Naive thymus-derived CD4-positive, alpha-beta T cell (primary cell): ENCODE measurements at regions of chr20 and their contacts with region 1.

Region 1: GRCh38 chr20:4813863-4814695 is 92.4 kb downstream of the PRND start:
- DNase-seq: peak; percentile 40 to 91 (median 88)
- ATAC-seq: peak; percentile 80
- H3K4me3 ChIP-seq: peak overlapping the region; percentile 86
- H3K4me3 Mint-ChIP-seq: peak overlapping the region; percentile 78 to 99 (median 92)
- H3K27ac ChIP-seq: peak overlapping the region; percentile 98
- H3K27ac Mint-ChIP-seq: peak overlapping the region; percentile 97 to 100 (median 99)
- H3K4me1 ChIP-seq: peaks cover 68 to 69% of the 10 kb centered on the region in 2 donors
- H3K4me1 Mint-ChIP-seq: peaks cover 56 to 92% (median 88%) of the 10 kb centered on the region in 7 donors
- H3K27me3 ChIP-seq: no peaks in the 10 kb centered on the region
- H3K27me3 Mint-ChIP-seq: no peaks in the 10 kb centered on the region

Region 2: DNA sequence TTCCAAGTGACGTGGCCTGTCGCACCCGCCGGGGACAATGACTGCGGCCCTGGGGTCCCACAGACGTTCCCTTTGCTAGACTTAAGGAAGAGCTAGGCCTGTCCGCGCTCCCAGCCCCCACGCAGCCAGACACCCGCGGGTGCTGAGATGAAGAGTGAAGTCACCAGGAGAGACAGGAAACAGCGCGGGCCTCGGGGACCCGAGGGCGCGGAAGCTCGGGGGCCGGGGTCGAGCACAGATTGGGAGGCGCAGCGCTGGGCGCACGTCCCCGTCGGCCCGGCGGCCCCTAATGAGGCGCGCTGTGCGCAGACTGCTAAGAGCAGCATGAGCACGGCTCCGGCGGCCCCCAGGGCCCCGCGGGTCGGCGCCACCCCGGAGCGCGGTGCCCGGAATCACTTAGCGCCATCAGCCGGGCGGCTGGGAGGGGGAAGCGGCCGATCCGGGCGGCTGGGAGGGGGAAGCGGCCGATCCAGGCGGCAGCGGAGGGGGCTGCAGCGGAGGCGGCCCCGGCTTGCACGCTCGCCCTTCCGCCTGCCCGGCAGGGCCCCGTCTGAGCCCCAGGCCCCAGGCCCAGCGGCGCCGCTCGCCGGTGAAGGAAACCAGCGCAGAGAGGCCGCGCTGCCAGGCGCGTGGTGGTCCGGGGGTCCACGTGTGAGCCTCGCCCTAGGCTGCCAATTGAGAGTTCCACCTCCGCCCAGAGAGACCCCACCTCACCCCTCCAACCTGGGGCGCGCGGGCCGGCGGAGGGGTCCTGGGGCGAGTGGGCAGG is 1721.3 kb before region 1 on chr20:
- CTCF ChIA-PET with region 1: no interaction called
- POLR2A ChIA-PET with region 1: no interaction called
- intact Hi-C with region 1: loop called in 1 of 2 experiments (anchors 5 kb)
- DNase-seq: peak in 8 of 9 donors; percentile 41 to 75 (median 70)
- ATAC-seq: peak; percentile 27
- H3K4me3 ChIP-seq: peak overlapping the region; percentile 28
- H3K4me3 Mint-ChIP-seq: peak overlapping the region; percentile 78 to 97 (median 93)
- H3K27ac ChIP-seq: peak overlapping the region; percentile 95
- H3K27ac Mint-ChIP-seq: peak overlapping the region; percentile 88 to 100 (median 100)
- H3K4me1 ChIP-seq: peaks cover 0 to 24% of the 10 kb centered on the region in 2 donors
- H3K4me1 Mint-ChIP-seq: peaks cover 17 to 50% (median 31%) of the 10 kb centered on the region in 7 donors
- H3K27me3 ChIP-seq: no peaks in the 10 kb centered on the region
- H3K27me3 Mint-ChIP-seq: peaks cover 0 to 39% (median 0%) of the 10 kb centered on the region in 5 donors

Region 3: DNA sequence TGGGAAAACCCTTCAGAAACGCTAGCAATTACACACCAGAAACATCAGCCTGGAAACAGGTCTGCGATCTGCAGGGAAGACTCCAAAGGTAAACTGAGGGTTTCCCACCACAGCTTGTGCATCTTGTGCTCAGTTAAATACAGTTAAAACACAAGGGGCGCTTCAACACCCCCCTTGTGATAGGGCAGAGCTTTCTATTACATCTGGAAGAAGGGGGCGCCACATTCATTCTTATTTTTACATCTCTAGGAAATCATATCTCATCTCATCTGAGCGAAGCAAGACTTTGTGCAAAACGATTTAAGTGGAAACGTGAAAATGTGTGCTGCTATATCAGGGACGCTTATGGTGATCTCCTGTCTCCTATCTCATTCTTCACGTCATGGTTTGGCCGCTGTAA is 33.8 kb before region 1 on chr20:
- CTCF ChIA-PET with region 1: interaction called, 9 read pairs
- POLR2A ChIA-PET with region 1: interaction called, 5 read pairs
- intact Hi-C with region 1: loop called in 1 of 2 experiments (anchors 1 kb)
- DNase-seq: peak in 6 of 9 donors; percentile 18 to 40 (median 27)
- ATAC-seq: peak; percentile 41
- H3K4me3 ChIP-seq: no peak overlapping the region
- H3K4me3 Mint-ChIP-seq: no peak overlapping the region
- H3K27ac ChIP-seq: no peak overlapping the region
- H3K27ac Mint-ChIP-seq: peak overlapping the region in 8 of 9 donors; percentile 63 to 82 (median 74)
- H3K4me1 ChIP-seq: no peaks in the 10 kb centered on the region
- H3K4me1 Mint-ChIP-seq: peaks cover 6 to 28% (median 16%) of the 10 kb centered on the region in 7 donors
- H3K27me3 ChIP-seq: no peaks in the 10 kb centered on the region
- H3K27me3 Mint-ChIP-seq: no peaks in the 10 kb centered on the region

Region 4: GRCh38 chr20:4795394-4795793 is 18.7 kb before region 1 on chr20:
- CTCF ChIA-PET with region 1: interaction called, 3 read pairs
- POLR2A ChIA-PET with region 1: interaction called, 20 read pairs
- intact Hi-C with region 1: no loop called
- DNase-seq: no peak
- ATAC-seq: peak; percentile 80
- H3K4me3 ChIP-seq: no peak overlapping the region
- H3K4me3 Mint-ChIP-seq: no peak overlapping the region
- H3K27ac ChIP-seq: no peak overlapping the region
- H3K27ac Mint-ChIP-seq: peak overlapping the region in 4 of 9 donors; percentile 17 to 70 (median 66)
- H3K4me1 ChIP-seq: no peaks in the 10 kb centered on the region
- H3K4me1 Mint-ChIP-seq: peaks cover 4 to 31% (median 8%) of the 10 kb centered on the region in 7 donors
- H3K27me3 ChIP-seq: no peaks in the 10 kb centered on the region
- H3K27me3 Mint-ChIP-seq: no peaks in the 10 kb centered on the region

Region 5: GRCh38 chr20:4956200-4956810 is 142.2 kb after region 1 on chr20:
- CTCF ChIA-PET with region 1: interaction called, 11 read pairs
- POLR2A ChIA-PET with region 1: interaction called, 3 read pairs
- intact Hi-C with region 1: loop called (anchors 1 to 5 kb)
- DNase-seq: peak in 7 of 9 donors; percentile 37 to 67 (median 55)
- ATAC-seq: peak; percentile 86
- H3K4me3 ChIP-seq: no peak overlapping the region
- H3K4me3 Mint-ChIP-seq: no peak overlapping the region
- H3K27ac ChIP-seq: no peak overlapping the region
- H3K27ac Mint-ChIP-seq: peak overlapping the region in 1 of 9 donors; percentile 4
- H3K4me1 ChIP-seq: peaks cover 1 to 2% of the 10 kb centered on the region in 2 donors
- H3K4me1 Mint-ChIP-seq: peaks cover under 1 to 19% (median 14%) of the 10 kb centered on the region in 7 donors
- H3K27me3 ChIP-seq: no peaks in the 10 kb centered on the region
- H3K27me3 Mint-ChIP-seq: no peaks in the 10 kb centered on the region

Region 6: GRCh38 chr20:5078399-5078958 is 264.4 kb after region 1 on chr20:
- CTCF ChIA-PET with region 1: no interaction called
- POLR2A ChIA-PET with region 1: no interaction called
- intact Hi-C with region 1: loop called (anchors 1 kb)
- DNase-seq: peak; percentile 39 to 78 (median 74)
- ATAC-seq: peak; percentile 95
- H3K4me3 ChIP-seq: peak overlapping the region; percentile 33
- H3K4me3 Mint-ChIP-seq: peak overlapping the region; percentile 61 to 92 (median 89)
- H3K27ac ChIP-seq: peak overlapping the region; percentile 79
- H3K27ac Mint-ChIP-seq: peak overlapping the region; percentile 97 to 100 (median 99)
- H3K4me1 ChIP-seq: peaks cover 16 to 25% of the 10 kb centered on the region in 2 donors
- H3K4me1 Mint-ChIP-seq: peaks cover 24 to 54% (median 32%) of the 10 kb centered on the region in 7 donors
- H3K27me3 ChIP-seq: no peaks in the 10 kb centered on the region
- H3K27me3 Mint-ChIP-seq: no peaks in the 10 kb centered on the region

Region 7: GRCh38 chr20:5126512-5127203 is 312.6 kb after region 1 on chr20 and contains the start of gene CDS2:
- CTCF ChIA-PET with region 1: no interaction called
- POLR2A ChIA-PET with region 1: interaction called, 4 read pairs
- intact Hi-C with region 1: loop called (anchors 2 kb)
- DNase-seq: peak; percentile 99
- ATAC-seq: peak; percentile 93
- H3K4me3 ChIP-seq: peak within 1 kb of the TSS; percentile 64
- H3K4me3 Mint-ChIP-seq: peak within 1 kb of the TSS; percentile 87 to 96 (median 93)
- H3K27ac ChIP-seq: peak within 1 kb of the TSS; percentile 99
- H3K27ac Mint-ChIP-seq: peak within 1 kb of the TSS; percentile 85 to 99 (median 94)
- H3K4me1 ChIP-seq: peaks cover 19 to 27% of the 10 kb centered on the region in 2 donors
- H3K4me1 Mint-ChIP-seq: peaks cover 15 to 58% (median 41%) of the 10 kb centered on the region in 7 donors
- H3K27me3 ChIP-seq: no peaks in the 10 kb centered on the region
- H3K27me3 Mint-ChIP-seq: no peaks in the 10 kb centered on the region
- total RNA-seq, gene CDS2: 48.3 to 58.3 (median 57.8) TPM